ENCODE measurements at regions of chr5 and their contacts with region 1.

Region 1: GRCh38 chr5:55691265-55692105 is 20.6 kb downstream of the SLC38A9 start:
- DNase-seq: no peak
- H3K4me3 Mint-ChIP-seq: no peak overlapping the region
- H3K27ac Mint-ChIP-seq: no peak overlapping the region
- H3K4me1 Mint-ChIP-seq: peaks cover 2% of the 10 kb centered on the region
- H3K27me3 Mint-ChIP-seq: no peaks in the 10 kb centered on the region

Region 2: GRCh38 chr5:55172051-55172899 is 519.2 kb before region 1 on chr5:
- CTCF ChIA-PET with region 1: interaction called, 6 read pairs
- POLR2A ChIA-PET with region 1: no interaction called
- intact Hi-C with region 1: loop called (anchors 1 kb)
- DNase-seq: peak; percentile 75
- H3K4me3 Mint-ChIP-seq: peak overlapping the region; percentile 80
- H3K27ac Mint-ChIP-seq: no peak overlapping the region
- H3K4me1 Mint-ChIP-seq: peaks cover 39% of the 10 kb centered on the region
- H3K27me3 Mint-ChIP-seq: peaks cover 60% of the 10 kb centered on the region

Region 3: DNA sequence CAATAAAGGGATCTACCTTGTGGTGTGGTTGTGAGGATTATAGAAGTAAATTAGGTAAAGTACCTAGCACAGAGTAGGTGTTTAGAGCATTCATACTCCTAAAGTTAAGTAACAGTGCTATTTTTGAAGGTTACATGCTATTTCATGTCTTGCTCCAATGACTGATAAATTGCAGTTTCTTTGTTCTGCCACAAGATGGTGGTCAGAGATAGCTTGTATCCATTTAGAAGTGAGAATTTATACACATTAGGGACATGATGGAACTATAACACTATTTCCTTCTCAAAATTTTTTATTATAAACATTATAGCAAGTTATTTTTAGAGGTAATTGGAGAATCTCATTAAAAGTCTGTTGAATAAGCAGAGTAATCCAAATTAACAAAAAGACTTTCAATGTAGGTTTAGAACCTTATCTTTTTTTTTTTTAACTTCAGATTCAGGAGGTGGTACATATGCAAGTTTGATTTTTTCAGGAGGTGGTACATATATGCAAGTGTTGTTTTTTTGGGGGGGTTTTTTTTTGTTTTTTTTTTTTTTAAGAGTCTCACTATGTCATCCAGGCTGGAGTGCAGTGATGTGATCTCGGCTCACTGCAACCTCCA is 366.6 kb before region 1 on chr5:
- CTCF ChIA-PET with region 1: interaction called, 5 read pairs
- POLR2A ChIA-PET with region 1: no interaction called
- intact Hi-C with region 1: loop called (anchors 1 kb)
- DNase-seq: no peak
- H3K4me3 Mint-ChIP-seq: no peak overlapping the region
- H3K27ac Mint-ChIP-seq: no peak overlapping the region
- H3K4me1 Mint-ChIP-seq: peaks cover 24% of the 10 kb centered on the region
- H3K27me3 Mint-ChIP-seq: no peaks in the 10 kb centered on the region

Region 4: DNA sequence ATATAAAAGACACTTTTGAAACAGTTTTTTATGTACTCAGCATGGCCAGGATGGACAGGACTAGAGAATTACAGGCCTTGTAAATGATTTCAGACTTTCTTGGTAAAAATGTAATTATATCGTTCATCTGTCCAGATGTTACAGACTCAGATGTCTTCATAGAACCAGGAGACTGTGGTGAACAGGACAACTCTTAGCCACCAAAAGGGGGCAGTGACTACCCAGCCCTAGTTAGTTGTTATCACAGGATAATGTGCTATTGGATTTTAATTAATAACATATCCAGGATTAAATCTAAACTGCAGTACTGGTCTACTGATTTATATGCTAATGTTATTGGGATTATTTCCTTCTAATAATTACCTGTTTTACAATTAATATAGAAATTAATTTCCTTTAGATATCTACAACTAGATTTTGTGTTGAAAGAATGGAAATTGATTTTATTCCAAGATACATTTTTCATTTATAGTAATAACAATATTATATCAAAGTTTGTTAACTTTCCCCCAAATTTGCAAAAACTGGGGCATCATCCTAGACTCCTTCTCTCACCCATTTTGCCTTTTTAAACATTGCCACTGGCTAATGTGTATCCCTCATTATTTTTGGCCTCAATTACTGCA is 284.3 kb before region 1 on chr5:
- CTCF ChIA-PET with region 1: interaction called, 12 read pairs
- POLR2A ChIA-PET with region 1: no interaction called
- intact Hi-C with region 1: loop called (anchors 1 kb)
- DNase-seq: no peak
- H3K4me3 Mint-ChIP-seq: no peak overlapping the region
- H3K27ac Mint-ChIP-seq: no peak overlapping the region
- H3K4me1 Mint-ChIP-seq: peaks cover 7% of the 10 kb centered on the region
- H3K27me3 Mint-ChIP-seq: no peaks in the 10 kb centered on the region

Region 5: DNA sequence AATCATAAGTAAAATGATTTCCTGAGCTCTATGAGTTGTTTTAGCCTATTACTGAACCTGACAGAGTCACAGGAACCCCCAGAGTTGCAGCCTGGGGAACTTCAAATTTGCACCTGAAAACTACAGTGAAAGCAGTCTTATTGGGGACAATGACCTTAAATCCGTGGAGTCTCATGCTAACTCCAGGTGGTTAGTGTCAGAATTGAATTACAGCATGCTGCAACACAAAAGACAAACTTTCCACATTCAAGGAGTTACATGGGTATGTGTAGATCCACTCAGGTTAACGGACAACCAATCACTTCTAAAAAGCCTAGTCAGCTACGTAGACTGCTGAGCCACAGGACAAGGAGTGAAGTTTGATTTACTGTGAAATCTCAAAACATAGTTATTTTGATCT is 206.4 kb before region 1 on chr5:
- CTCF ChIA-PET with region 1: no interaction called
- POLR2A ChIA-PET with region 1: no interaction called
- intact Hi-C with region 1: no loop called
- DNase-seq: no peak
- H3K4me3 Mint-ChIP-seq: no peak overlapping the region
- H3K27ac Mint-ChIP-seq: no peak overlapping the region
- H3K4me1 Mint-ChIP-seq: peaks cover 11% of the 10 kb centered on the region
- H3K27me3 Mint-ChIP-seq: no peaks in the 10 kb centered on the region

Region 6: GRCh38 chr5:55534436-55535198 is 156.9 kb before region 1 on chr5 and contains the start of gene PLPP1:
- CTCF ChIA-PET with region 1: no interaction called
- POLR2A ChIA-PET with region 1: no interaction called
- intact Hi-C with region 1: loop called (anchors 10 kb)
- DNase-seq: peak; percentile 89
- H3K4me3 Mint-ChIP-seq: peak within 1 kb of the TSS; percentile 85
- H3K27ac Mint-ChIP-seq: peak within 1 kb of the TSS; percentile 77
- H3K4me1 Mint-ChIP-seq: peaks cover 24% of the 10 kb centered on the region
- H3K27me3 Mint-ChIP-seq: no peaks in the 10 kb centered on the region
- total RNA-seq, gene PLPP1: 6.7 to 7.2 TPM

Region 7: GRCh38 chr5:55701462-55702103 is 10.1 kb after region 1 on chr5:
- CTCF ChIA-PET with region 1: interaction called, 10 read pairs
- POLR2A ChIA-PET with region 1: no interaction called
- intact Hi-C with region 1: no loop called
- DNase-seq: no peak
- H3K4me3 Mint-ChIP-seq: no peak overlapping the region
- H3K27ac Mint-ChIP-seq: no peak overlapping the region
- H3K4me1 Mint-ChIP-seq: peaks cover 14% of the 10 kb centered on the region
- H3K27me3 Mint-ChIP-seq: no peaks in the 10 kb centered on the region

Region 8: GRCh38 chr5:55821731-55822512 is 130.4 kb after region 1 on chr5:
- CTCF ChIA-PET with region 1: no interaction called
- POLR2A ChIA-PET with region 1: no interaction called
- intact Hi-C with region 1: no loop called
- DNase-seq: peak; percentile 18
- H3K4me3 Mint-ChIP-seq: peak overlapping the region; percentile 43
- H3K27ac Mint-ChIP-seq: no peak overlapping the region
- H3K4me1 Mint-ChIP-seq: peaks cover 9% of the 10 kb centered on the region
- H3K27me3 Mint-ChIP-seq: peaks cover 41% of the 10 kb centered on the region

Region 9: DNA sequence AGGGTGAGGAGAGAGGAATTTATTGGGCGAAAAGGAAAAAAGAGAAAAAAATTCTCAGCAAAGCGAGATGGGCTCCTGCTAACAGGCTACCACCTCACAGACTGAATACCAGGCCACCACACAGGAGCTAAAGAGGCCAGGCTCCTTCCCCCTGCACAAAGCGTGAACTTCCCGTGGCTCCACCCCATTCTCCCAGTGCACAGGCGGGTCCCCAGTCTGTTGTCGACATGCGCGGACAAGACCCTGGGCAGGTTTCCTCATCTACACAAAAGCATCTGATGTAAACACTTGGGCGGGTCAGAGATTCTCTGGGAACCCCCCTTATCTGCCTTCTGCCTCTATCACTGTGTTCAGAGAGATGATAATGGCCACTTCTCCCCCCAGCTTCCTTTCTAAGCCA is 193.9 kb after region 1 on chr5:
- CTCF ChIA-PET with region 1: no interaction called
- POLR2A ChIA-PET with region 1: no interaction called
- intact Hi-C with region 1: no loop called
- DNase-seq: no peak
- H3K4me3 Mint-ChIP-seq: no peak overlapping the region
- H3K27ac Mint-ChIP-seq: no peak overlapping the region
- H3K4me1 Mint-ChIP-seq: no peaks in the 10 kb centered on the region
- H3K27me3 Mint-ChIP-seq: peaks cover 3% of the 10 kb centered on the region